ENCODE measurements at regions of chr1 and their contacts with region 1.

Region 1: GRCh38 chr1:87279966-87280535 is 48.6 kb upstream of the LMO4 start:
- DNase-seq: no peak
- H3K4me3 ChIP-seq: no peak overlapping the region
- H3K27ac ChIP-seq: no peak overlapping the region
- H3K4me1 ChIP-seq: no peaks in the 10 kb centered on the region
- H3K27me3 ChIP-seq: no peaks in the 10 kb centered on the region
- CTCF ChIP-seq: no peak
- EP300 ChIP-seq: no peak
- POLR2A ChIP-seq: no peak

Region 2: DNA sequence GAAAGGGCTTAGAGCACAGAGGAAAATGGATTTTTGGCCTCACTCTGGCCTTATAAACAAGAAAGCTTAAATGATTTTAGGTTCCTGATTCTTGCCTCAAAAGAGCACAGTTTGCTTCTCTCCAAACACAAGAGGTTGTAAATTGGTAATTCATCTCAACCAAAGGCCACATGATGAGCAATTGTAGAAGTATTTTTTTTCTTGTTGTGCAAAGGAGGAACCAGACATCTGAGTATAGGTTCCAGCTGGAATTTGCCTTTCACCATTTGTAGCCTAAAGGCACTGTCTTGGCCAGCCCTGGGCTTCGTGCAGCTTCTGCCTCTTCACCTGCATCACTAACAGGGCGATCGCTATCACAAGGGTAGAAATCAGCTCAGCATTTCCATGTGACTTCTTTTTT is 130.4 kb before region 1 on chr1:
- in situ Hi-C with region 1: no loop called
- intact Hi-C with region 1: loop called (anchors 10 kb)
- DNase-seq: no peak
- H3K4me3 ChIP-seq: no peak overlapping the region
- H3K27ac ChIP-seq: peak overlapping the region in 3 of 4 donors; percentile 56 to 63 (median 60)
- H3K4me1 ChIP-seq: peaks cover 0 to 27% (median 7%) of the 10 kb centered on the region in 4 donors
- H3K27me3 ChIP-seq: no peaks in the 10 kb centered on the region
- CTCF ChIP-seq: no peak
- EP300 ChIP-seq: no peak
- POLR2A ChIP-seq: no peak

Region 3: GRCh38 chr1:87426463-87427249 is 146.6 kb after region 1 on chr1:
- in situ Hi-C with region 1: no loop called
- intact Hi-C with region 1: no loop called
- DNase-seq: no peak
- H3K4me3 ChIP-seq: no peak overlapping the region
- H3K27ac ChIP-seq: no peak overlapping the region
- H3K4me1 ChIP-seq: peaks cover 0 to 7% (median 0%) of the 10 kb centered on the region in 4 donors
- H3K27me3 ChIP-seq: no peaks in the 10 kb centered on the region
- CTCF ChIP-seq: no peak
- EP300 ChIP-seq: no peak
- POLR2A ChIP-seq: no peak

Measured in transverse colon (tissue), 4 donors.